ENCODE measurements at regions of chr12 and their contacts with region 1.

Region 1: DNA sequence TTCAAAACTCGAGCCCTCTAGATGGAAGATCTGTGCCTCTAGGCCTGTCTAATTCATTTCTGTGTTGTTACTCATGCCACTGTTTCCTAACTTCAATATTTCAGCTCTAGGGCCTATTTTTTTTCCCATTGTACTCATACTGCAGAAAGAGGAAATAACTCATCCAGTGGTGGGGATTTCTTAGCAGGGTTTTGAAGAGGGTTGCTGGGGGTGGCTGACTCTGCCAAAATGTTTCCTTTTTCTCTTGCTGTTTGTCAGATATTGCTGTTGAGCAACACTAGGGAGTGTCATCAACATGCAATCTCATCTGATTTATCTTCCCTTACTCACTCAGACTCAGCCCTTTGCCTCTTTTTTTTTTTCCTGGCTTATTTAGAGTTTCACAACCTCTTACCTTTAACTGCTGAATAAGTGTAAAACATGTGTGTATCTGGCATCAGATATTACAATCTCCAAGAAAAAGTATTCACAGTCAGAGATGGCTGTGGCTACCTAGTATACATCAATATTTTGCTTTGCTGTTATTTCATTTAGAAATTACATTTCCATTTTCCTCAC is 189.5 kb downstream of the DUSP6 start:
- DNase-seq: peak in 1 of 9 donors; percentile 54
- ATAC-seq: peak; percentile 77
- H3K4me3 ChIP-seq: no peak overlapping the region
- H3K4me3 Mint-ChIP-seq: no peak overlapping the region
- H3K27ac ChIP-seq: no peak overlapping the region
- H3K27ac Mint-ChIP-seq: no peak overlapping the region
- H3K4me1 ChIP-seq: peaks cover 0 to 9% of the 10 kb centered on the region in 2 donors
- H3K4me1 Mint-ChIP-seq: peaks cover 10 to 31% (median 20%) of the 10 kb centered on the region in 7 donors
- H3K27me3 ChIP-seq: no peaks in the 10 kb centered on the region
- H3K27me3 Mint-ChIP-seq: no peaks in the 10 kb centered on the region

Region 2: DNA sequence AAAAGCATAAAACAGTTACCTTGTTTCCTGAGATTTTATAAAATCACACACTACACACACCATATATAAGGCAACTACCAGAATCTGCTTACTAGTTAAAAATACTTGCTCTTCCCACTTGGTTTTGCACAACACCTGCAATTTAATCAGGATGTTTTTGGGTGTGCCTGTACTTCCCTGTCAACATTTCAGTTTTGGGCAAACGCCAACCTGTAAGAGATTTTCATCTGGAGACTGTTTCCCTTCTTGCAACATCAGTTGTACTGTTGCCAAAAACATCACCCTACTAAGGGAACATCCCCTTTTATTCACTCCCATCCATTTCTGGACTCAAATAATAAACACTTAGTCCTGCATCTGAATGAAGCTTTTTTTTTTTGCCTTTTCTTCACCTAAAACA is 17.2 kb after region 1 on chr12:
- CTCF ChIA-PET with region 1: no interaction called
- POLR2A ChIA-PET with region 1: no interaction called
- intact Hi-C with region 1: loop called in 1 of 2 experiments (anchors 1 kb)
- DNase-seq: no peak
- ATAC-seq: peak; percentile 36
- H3K4me3 ChIP-seq: no peak overlapping the region
- H3K4me3 Mint-ChIP-seq: peak overlapping the region in 1 of 10 donors; percentile 47
- H3K27ac ChIP-seq: no peak overlapping the region
- H3K27ac Mint-ChIP-seq: peak overlapping the region in 1 of 9 donors; percentile 77
- H3K4me1 ChIP-seq: peaks cover 0 to 5% of the 10 kb centered on the region in 2 donors
- H3K4me1 Mint-ChIP-seq: peaks cover 6 to 46% (median 14%) of the 10 kb centered on the region in 7 donors
- H3K27me3 ChIP-seq: no peaks in the 10 kb centered on the region
- H3K27me3 Mint-ChIP-seq: no peaks in the 10 kb centered on the region

Region 3: GRCh38 chr12:89775063-89775985 is 612.5 kb after region 1 on chr12:
- CTCF ChIA-PET with region 1: no interaction called
- POLR2A ChIA-PET with region 1: no interaction called
- intact Hi-C with region 1: no loop called
- DNase-seq: no peak
- ATAC-seq: no peak
- H3K4me3 ChIP-seq: no peak overlapping the region
- H3K4me3 Mint-ChIP-seq: no peak overlapping the region
- H3K27ac ChIP-seq: no peak overlapping the region
- H3K27ac Mint-ChIP-seq: no peak overlapping the region
- H3K4me1 ChIP-seq: no peaks in the 10 kb centered on the region
- H3K4me1 Mint-ChIP-seq: peaks cover 0 to 3% (median 0%) of the 10 kb centered on the region in 7 donors
- H3K27me3 ChIP-seq: no peaks in the 10 kb centered on the region
- H3K27me3 Mint-ChIP-seq: no peaks in the 10 kb centered on the region